Heart left ventricle (tissue), 16 donors: ENCODE measurements at regions of chr10 and their contacts with region 1.

Region 1: DNA sequence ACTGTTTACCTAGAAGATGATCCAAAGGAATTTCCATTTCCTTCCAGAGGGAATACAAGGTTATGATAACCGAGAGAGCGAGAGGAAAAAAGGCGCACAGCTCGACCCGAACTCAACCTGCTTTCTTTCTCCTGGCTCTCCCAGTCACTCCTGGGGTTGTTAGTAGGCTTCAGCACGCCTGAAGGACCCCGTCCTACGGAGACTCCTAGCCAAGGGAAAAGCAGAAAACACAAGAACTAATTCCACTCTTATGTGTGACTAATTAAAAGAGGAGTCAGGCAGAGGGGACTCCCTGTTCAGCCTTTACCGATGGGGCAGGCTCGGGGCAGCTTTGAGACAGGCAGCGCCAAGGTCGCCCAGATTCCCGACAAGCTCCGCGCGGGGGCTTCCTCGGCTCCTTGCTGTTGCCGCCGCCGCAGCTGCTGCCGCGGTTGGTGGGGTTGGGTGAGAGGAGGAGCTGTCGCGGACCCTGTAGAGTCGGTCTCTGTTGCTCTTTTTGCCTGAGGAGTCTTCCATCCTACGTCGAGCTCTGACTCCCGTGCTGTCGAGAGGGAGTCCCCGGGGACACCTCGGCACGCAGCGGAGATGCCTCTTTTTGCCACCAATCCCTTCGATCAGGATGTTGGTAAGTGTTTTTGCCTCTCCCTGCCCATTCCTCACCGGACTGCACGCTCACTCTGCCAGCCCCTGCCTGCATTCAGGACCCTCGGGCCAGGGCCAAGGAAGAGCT is at the start of gene STAM:
- DNase-seq: peak; percentile 90 to 96 (median 94)
- ATAC-seq: peak; percentile 83 to 95 (median 94)
- H3K4me3 ChIP-seq: peak within 1 kb of the TSS; percentile 72 to 98 (median 86)
- H3K27ac ChIP-seq: peak within 1 kb of the TSS; percentile 95 to 100 (median 98)
- H3K4me1 ChIP-seq: peaks cover 0 to 53% (median 43%) of the 10 kb centered on the region in 12 donors
- H3K27me3 ChIP-seq: no peaks in the 10 kb centered on the region
- CTCF ChIP-seq: no peak
- POLR2A ChIP-seq: peak in 1 of 2 donors; percentile 60
- total RNA-seq, gene STAM: 26.5 to 40.0 (median 32.9) TPM

Region 2: DNA sequence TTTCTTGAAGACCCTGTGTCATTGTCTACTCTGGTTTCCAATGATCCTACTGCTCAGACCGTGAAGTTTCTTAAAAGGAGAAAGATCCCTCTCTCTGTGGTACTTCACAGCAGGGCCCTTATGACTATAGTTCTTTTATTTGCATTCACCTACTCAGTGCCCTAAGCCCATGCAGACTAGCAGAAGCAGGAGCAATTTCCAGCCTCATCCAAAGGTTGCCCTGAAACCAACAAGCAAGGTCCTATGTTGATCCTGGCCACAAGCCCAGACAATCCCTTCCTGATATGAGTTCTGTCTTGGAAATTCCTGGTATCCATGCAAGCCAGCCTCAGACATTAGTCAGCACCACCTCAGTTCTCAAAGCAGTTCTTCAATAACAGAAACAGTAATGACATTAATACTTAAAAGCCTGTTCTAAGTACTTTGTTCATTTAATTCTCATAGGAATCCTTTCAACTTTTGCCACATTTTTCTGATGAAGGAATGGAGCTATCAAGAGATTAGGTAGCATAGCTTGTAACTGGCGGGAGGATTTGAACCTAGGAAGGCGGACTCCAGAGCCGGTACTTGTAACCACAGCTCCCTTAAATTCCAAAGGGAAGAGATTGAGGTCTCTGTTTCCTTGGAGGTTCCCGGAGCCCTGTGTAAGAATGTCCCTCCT is 131.4 kb before region 1 on chr10:
- intact Hi-C with region 1: no loop called
- DNase-seq: peak in 3 of 5 donors; percentile 37 to 61 (median 55)
- ATAC-seq: peak; percentile 69 to 85 (median 78)
- H3K4me3 ChIP-seq: no peak overlapping the region
- H3K27ac ChIP-seq: peak overlapping the region in 6 of 12 donors; percentile 1 to 70 (median 39)
- H3K4me1 ChIP-seq: peaks cover 0 to 19% (median 0%) of the 10 kb centered on the region in 12 donors
- H3K27me3 ChIP-seq: no peaks in the 10 kb centered on the region
- CTCF ChIP-seq: no peak
- POLR2A ChIP-seq: no peak

Region 3: GRCh38 chr10:17703706-17704105 is 59.8 kb after region 1 on chr10:
- intact Hi-C with region 1: loop called in 1 of 10 experiments (anchors 10 kb)
- DNase-seq: no peak
- ATAC-seq: no peak
- H3K4me3 ChIP-seq: no peak overlapping the region
- H3K27ac ChIP-seq: no peak overlapping the region
- H3K4me1 ChIP-seq: no peaks in the 10 kb centered on the region
- H3K27me3 ChIP-seq: no peaks in the 10 kb centered on the region
- CTCF ChIP-seq: no peak
- POLR2A ChIP-seq: no peak